Astrocyte of the spinal cord (primary cell): ENCODE measurements at regions of chr17 and their contacts with region 1.

Region 1: GRCh38 chr17:81512560-81513371 is at the start of gene ACTG1:
- DNase-seq: peak; percentile 95
- H3K4me3 ChIP-seq: peak within 1 kb of the TSS; percentile 88
- CTCF ChIP-seq: no peak

Region 2: DNA sequence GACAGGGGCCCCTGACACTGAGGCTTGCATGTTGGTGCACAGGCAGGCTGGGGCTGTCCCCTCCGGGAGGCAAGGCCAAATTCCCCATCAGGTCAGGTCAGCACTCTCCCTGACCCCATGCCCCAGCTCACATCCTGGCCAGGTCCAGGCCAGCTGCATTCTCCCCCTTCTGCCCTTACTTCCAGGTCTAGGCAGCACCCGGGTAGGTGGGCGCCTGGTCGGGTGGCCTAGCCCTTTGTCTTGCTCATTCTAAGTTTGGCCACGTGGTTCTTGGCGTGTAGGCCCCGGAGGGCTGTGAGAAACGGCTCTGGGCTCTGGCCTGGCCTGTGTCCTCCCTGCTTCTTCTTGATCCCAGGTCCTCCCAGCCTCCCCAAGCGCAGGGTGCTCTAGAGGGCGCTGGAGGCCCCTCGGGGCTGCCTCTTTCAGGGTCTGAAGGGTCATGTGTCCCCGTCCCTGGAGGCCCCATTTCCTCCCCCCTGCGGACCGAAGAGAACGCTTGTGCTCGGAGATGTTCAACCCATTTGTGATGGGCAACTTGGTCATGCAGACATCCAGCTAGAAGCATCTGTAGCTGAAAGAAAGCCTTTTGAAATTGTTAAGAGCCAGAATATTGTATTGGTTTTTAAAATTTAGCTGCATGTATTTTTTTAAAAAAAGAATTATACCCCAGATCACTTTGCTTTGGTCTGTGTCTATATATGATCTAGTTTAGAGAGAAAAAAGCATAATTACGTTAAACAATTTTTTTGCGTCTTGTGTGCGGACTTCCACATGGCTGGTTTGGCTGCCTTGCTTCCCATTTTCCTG is 110.8 kb before region 1 on chr17:
- in situ Hi-C with region 1: loop called (anchors 10 kb)
- DNase-seq: no peak
- H3K4me3 ChIP-seq: no peak overlapping the region
- CTCF ChIP-seq: peak; percentile 55

Region 3: GRCh38 chr17:81576621-81577277 is 64.0 kb after region 1 on chr17:
- in situ Hi-C with region 1: no loop called
- DNase-seq: peak; percentile 89
- H3K4me3 ChIP-seq: no peak overlapping the region
- CTCF ChIP-seq: no peak